ENCODE measurements at regions of chr4 and their contacts with region 1.

Region 1: DNA sequence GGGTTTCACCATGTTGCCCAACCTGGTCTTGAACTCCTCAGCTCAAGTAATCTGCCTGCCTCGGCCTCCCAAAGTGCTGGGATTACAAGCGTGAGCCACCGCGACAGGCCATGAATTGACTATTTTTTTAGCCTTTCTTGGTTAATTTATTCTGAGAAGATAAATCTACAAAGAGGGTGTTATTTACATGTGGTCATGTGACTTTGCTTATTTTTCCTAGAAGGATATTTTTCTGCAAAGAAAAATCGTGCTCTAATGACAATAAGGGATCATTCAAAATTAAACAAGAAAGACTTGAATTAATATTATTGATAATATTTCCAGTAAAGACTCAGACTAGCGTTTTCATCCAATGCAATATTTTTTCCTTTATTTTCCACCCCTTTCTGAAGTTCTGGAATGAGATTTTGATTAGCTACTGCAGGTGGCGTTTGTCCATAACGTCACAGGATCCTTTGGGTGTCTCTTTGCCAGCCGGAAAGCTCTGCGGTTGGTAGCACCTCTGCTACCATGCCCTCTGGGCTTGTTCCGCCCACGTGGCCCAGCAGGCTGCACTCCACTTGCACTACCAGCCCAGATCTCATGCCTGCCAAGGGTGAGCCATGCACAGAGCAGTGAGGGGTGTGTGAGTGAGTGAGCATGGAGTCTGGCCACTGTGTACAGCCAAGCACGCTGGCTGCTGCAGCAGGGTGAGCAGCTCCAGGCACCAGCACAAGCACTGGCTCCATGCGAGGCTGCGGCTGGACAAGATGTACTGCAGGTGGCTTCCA is 6.4 kb upstream of the HNRNPD start:
- DNase-seq: peak; percentile 97
- H3K4me3 Mint-ChIP-seq: peak overlapping the region; percentile 43
- H3K27ac Mint-ChIP-seq: peak overlapping the region; percentile 3
- H3K4me1 Mint-ChIP-seq: peaks cover 27% of the 10 kb centered on the region
- H3K27me3 Mint-ChIP-seq: no peaks in the 10 kb centered on the region
- CTCF ChIP-seq: peak; percentile 25

Region 2: DNA sequence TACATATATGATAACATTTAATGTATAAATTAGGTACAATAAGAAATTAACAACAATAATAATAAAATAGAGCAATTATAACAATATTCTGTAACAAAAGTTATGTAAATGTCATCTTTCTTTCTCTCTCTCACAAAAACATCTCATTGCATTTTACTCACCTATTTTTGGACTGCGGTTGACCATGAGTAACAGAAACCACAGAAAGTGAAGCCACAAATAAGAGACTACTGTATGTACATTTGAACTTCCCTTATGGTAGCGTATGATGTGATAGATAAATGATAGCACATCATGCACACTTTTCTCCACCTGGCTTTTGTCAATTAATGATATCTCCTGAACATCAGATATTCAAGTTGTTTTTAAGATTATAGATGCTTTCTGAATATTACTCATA is 86.8 kb before region 1 on chr4:
- CTCF ChIA-PET with region 1: no interaction called
- POLR2A ChIA-PET with region 1: no interaction called
- intact Hi-C with region 1: no loop called
- DNase-seq: no peak
- H3K4me3 Mint-ChIP-seq: no peak overlapping the region
- H3K27ac Mint-ChIP-seq: no peak overlapping the region
- H3K4me1 Mint-ChIP-seq: no peaks in the 10 kb centered on the region
- H3K27me3 Mint-ChIP-seq: no peaks in the 10 kb centered on the region
- CTCF ChIP-seq: no peak

Region 3: GRCh38 chr4:82423245-82424054 is 43.3 kb after region 1 on chr4:
- CTCF ChIA-PET with region 1: interaction called, 38 read pairs
- POLR2A ChIA-PET with region 1: interaction called, 240 read pairs
- intact Hi-C with region 1: no loop called
- DNase-seq: no peak
- H3K4me3 Mint-ChIP-seq: no peak overlapping the region
- H3K27ac Mint-ChIP-seq: no peak overlapping the region
- H3K4me1 Mint-ChIP-seq: peaks cover 25% of the 10 kb centered on the region
- H3K27me3 Mint-ChIP-seq: no peaks in the 10 kb centered on the region
- CTCF ChIP-seq: no peak

Region 4: GRCh38 chr4:82437285-82438005 is 57.3 kb after region 1 on chr4:
- CTCF ChIA-PET with region 1: interaction called, 4 read pairs
- POLR2A ChIA-PET with region 1: interaction called, 30 read pairs
- intact Hi-C with region 1: no loop called
- DNase-seq: peak; percentile 91
- H3K4me3 Mint-ChIP-seq: peak overlapping the region; percentile 45
- H3K27ac Mint-ChIP-seq: peak overlapping the region; percentile 63
- H3K4me1 Mint-ChIP-seq: peaks cover 33% of the 10 kb centered on the region
- H3K27me3 Mint-ChIP-seq: no peaks in the 10 kb centered on the region
- CTCF ChIP-seq: no peak